Activated CD4-positive, alpha-beta T cell treated with anti-CD3 and anti-CD28 coated beads for 36 hours (primary cell): ENCODE measurements at regions of chr18 and their contacts with region 1.

Region 1: GRCh38 chr18:45621061-45621511 is 5.8 kb downstream of the SLC14A2 start:
- DNase-seq: peak; percentile 51
- ATAC-seq: peak; percentile 47
- H3K4me3 Mint-ChIP-seq: no peak overlapping the region
- H3K27ac Mint-ChIP-seq: no peak overlapping the region
- H3K4me1 Mint-ChIP-seq: no peaks in the 10 kb centered on the region
- H3K27me3 Mint-ChIP-seq: peaks cover 8% of the 10 kb centered on the region

Region 2: GRCh38 chr18:45571714-45572113 is 49.4 kb before region 1 on chr18:
- CTCF ChIA-PET with region 1: no interaction called
- POLR2A ChIA-PET with region 1: no interaction called
- intact Hi-C with region 1: loop called in 1 of 2 experiments (anchors 5 kb)
- DNase-seq: peak; percentile 9
- ATAC-seq: no peak
- H3K4me3 Mint-ChIP-seq: no peak overlapping the region
- H3K27ac Mint-ChIP-seq: no peak overlapping the region
- H3K4me1 Mint-ChIP-seq: no peaks in the 10 kb centered on the region
- H3K27me3 Mint-ChIP-seq: peaks cover 4% of the 10 kb centered on the region

Region 3: DNA sequence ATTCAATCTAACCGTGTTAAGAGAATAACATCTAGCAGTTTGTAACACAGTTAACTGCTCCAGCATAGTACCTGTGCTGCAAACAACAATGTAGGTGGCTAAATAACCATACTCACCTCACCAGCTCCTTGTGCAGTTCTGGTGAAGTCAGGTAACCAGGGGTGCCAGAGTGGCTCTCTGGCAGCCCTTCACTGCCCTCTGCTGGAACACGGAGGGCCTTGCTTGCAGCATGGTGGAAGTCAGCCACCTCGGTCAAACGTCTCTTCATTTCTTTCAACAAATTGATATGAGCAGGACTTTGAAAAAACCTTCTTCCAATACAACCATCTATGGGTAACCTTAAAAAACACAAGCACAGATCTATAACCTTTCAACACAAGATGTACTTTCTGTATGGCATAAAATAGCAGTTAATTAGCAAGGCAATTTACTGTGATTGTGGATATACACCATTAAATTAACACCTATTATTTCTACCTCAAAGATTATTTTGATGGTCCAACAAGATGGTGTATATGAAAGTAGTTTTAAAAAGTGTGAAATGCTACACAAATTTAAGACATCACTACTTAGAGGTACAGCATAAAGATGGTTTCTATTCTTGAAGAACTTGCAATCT is 289.4 kb after region 1 on chr18:
- CTCF ChIA-PET with region 1: interaction called, 6 read pairs
- POLR2A ChIA-PET with region 1: no interaction called
- intact Hi-C with region 1: loop called in 1 of 2 experiments (anchors 1 kb)
- DNase-seq: peak; percentile 81
- ATAC-seq: peak; percentile 89
- H3K4me3 Mint-ChIP-seq: no peak overlapping the region
- H3K27ac Mint-ChIP-seq: no peak overlapping the region
- H3K4me1 Mint-ChIP-seq: no peaks in the 10 kb centered on the region
- H3K27me3 Mint-ChIP-seq: no peaks in the 10 kb centered on the region